ENCODE measurements at regions of chr17 and their contacts with region 1.

Region 1: DNA sequence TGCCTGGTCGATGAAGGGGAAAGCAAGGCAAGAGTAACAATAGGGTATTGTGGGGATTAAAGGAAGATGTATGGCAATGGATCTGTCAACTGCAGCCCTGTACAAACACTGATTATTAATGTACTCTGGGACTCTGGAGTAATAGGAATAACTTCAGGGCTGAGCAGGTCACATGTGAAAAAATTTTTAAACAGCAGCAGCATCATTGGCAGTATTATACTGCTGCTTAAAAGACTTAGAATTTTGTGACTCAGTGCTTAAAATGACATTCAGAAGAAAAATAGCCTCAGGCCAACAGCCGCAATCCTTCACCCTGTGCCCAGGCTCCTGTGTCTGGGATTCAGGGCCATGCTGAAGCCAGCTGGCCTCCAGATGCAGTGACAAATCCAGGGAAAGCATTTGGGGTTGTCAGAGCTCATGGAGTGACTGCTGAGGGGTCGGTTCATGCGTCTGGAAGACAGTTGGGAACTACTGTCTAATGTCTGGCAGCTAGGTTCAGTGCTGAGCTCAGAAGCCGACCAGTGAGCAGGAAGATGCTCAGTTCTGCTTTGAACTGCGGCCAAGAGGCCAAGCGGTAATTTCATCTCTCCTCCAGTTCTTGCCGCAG is 22.2 kb downstream of the TEX2 start:
- DNase-seq: peak; percentile 64
- H3K4me3 Mint-ChIP-seq: no peak overlapping the region
- H3K27ac Mint-ChIP-seq: peak overlapping the region; percentile 76
- H3K4me1 Mint-ChIP-seq: peaks cover 52% of the 10 kb centered on the region
- H3K27me3 Mint-ChIP-seq: no peaks in the 10 kb centered on the region
- CTCF ChIP-seq: no peak

Region 2: GRCh38 chr17:64209983-64210382 is 30.9 kb before region 1 on chr17:
- CTCF ChIA-PET with region 1: interaction called, 3 read pairs
- POLR2A ChIA-PET with region 1: interaction called, 15 read pairs
- intact Hi-C with region 1: no loop called
- DNase-seq: peak; percentile 30
- H3K4me3 Mint-ChIP-seq: peak overlapping the region; percentile 35
- H3K27ac Mint-ChIP-seq: peak overlapping the region; percentile 21
- H3K4me1 Mint-ChIP-seq: peaks cover 28% of the 10 kb centered on the region
- H3K27me3 Mint-ChIP-seq: no peaks in the 10 kb centered on the region
- CTCF ChIP-seq: no peak

Region 3: DNA sequence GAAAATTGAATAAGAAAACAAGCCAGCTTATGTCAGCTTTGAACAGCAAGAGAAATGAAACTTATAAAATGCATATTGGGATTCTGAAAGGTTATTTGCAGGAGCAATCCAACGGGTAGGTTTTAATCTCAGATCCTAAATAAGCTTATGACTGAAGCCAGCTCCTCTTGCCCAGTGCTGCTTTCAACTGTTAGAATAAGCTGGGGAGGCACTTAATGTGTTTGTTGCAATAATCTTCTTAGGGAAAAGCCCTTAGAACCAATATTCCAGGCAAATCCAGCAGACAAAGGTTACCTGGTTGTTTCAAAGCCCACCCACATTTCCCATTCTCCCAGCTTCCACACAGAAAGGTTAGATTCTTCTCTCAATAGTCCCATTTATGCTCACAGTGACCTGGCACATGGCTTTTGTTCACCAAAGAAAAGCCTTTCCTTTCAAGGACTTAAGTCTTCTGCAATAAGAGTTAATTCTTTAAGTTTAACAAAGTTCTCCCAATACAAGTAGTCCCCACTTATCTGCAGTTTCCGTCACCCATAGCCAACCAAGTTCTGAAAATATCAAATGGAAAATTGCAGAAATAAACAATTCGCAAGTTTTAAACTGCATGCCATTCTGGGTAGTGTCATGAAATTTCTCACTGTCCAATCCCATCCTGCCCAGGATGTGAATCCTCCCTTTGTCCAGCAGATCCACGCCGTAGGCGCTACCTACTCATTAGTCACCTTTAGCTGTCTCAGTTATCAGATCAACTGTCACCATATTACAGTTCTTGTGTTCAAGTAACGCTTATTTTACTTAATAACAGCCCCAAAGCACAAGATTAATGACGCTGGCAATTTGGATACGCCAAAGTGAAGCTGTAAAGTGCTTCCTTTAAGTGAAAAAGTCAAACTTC is 16.3 kb after region 1 on chr17:
- CTCF ChIA-PET with region 1: interaction called, 3 read pairs
- POLR2A ChIA-PET with region 1: interaction called, 23 read pairs
- intact Hi-C with region 1: no loop called
- DNase-seq: peak; percentile 67
- H3K4me3 Mint-ChIP-seq: peak overlapping the region; percentile 43
- H3K27ac Mint-ChIP-seq: peak overlapping the region; percentile 49
- H3K4me1 Mint-ChIP-seq: peaks cover 56% of the 10 kb centered on the region
- H3K27me3 Mint-ChIP-seq: no peaks in the 10 kb centered on the region
- CTCF ChIP-seq: no peak

Measured in MCF 10A (cell line).